Activated CD8-positive, alpha-beta T cell treated with anti-CD3 and anti-CD28 coated beads for 36 hours (primary cell): ENCODE measurements at regions of chr5 and their contacts with region 1.

Region 1: GRCh38 chr5:10335711-10336470 is 17.6 kb upstream of the MARCHF6 start:
- DNase-seq: no peak
- ATAC-seq: no peak
- H3K4me3 Mint-ChIP-seq: no peak overlapping the region
- H3K27ac Mint-ChIP-seq: no peak overlapping the region
- H3K4me1 Mint-ChIP-seq: peaks cover 4% of the 10 kb centered on the region
- H3K27me3 Mint-ChIP-seq: peaks cover 33% of the 10 kb centered on the region
- CTCF ChIP-seq: no peak

Region 2: GRCh38 chr5:10323588-10324488 is 12.1 kb before region 1 on chr5:
- CTCF ChIA-PET with region 1: no interaction called
- POLR2A ChIA-PET with region 1: no interaction called
- intact Hi-C with region 1: loop called (anchors 1 kb)
- DNase-seq: no peak
- ATAC-seq: no peak
- H3K4me3 Mint-ChIP-seq: no peak overlapping the region
- H3K27ac Mint-ChIP-seq: no peak overlapping the region
- H3K4me1 Mint-ChIP-seq: no peaks in the 10 kb centered on the region
- H3K27me3 Mint-ChIP-seq: no peaks in the 10 kb centered on the region
- CTCF ChIP-seq: no peak